Heart right ventricle (tissue), 16 donors: ENCODE measurements at regions of chr2 and their contacts with region 1.

Region 1: GRCh38 chr2:64410671-64411070 is 43.3 kb upstream of the LGALSL start:
- DNase-seq: no peak
- ATAC-seq: no peak
- H3K4me3 ChIP-seq: no peak overlapping the region
- H3K27ac ChIP-seq: no peak overlapping the region
- H3K4me1 ChIP-seq: peaks cover 0 to 11% (median 7%) of the 10 kb centered on the region in 9 donors
- H3K27me3 ChIP-seq: no peaks in the 10 kb centered on the region
- CTCF ChIP-seq: no peak

Region 2: DNA sequence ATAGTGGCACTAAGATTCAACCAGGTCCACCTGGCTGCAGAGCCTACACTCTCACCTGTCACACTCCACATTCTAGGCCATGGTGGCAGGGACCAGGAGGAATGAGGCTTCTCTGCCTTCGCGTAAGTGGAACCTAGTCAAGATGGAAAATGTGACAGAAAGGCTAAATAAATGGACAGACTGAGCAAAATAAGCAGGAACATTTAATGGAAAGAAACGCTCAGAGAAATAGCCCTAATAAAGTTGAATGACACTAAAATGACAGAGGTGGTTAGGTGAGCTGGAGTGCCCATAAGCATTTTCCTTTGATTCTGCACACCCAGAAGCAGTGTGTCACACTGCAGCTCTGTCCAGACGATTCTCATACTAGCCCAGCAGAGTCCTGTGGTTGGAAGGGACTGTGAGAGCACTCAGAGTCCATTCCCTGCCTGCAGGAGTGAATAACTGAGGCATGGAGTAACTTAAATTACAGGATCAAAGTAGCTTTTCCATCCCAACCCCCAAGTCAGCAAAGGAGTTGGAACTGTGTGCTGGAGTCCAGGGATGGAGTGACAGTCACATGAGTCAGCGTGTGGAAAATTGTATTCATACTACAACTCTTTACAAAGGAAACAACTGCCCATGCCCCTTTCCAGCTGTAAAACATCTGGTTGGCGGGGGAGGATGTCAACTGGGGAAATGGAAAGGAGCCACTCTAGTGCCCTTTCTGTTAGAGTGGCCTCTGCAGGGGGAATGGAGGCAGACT is 62.1 kb before region 1 on chr2:
- intact Hi-C with region 1: no loop called
- DNase-seq: no peak
- ATAC-seq: no peak
- H3K4me3 ChIP-seq: no peak overlapping the region
- H3K27ac ChIP-seq: no peak overlapping the region
- H3K4me1 ChIP-seq: no peaks in the 10 kb centered on the region
- H3K27me3 ChIP-seq: no peaks in the 10 kb centered on the region
- CTCF ChIP-seq: no peak

Region 3: DNA sequence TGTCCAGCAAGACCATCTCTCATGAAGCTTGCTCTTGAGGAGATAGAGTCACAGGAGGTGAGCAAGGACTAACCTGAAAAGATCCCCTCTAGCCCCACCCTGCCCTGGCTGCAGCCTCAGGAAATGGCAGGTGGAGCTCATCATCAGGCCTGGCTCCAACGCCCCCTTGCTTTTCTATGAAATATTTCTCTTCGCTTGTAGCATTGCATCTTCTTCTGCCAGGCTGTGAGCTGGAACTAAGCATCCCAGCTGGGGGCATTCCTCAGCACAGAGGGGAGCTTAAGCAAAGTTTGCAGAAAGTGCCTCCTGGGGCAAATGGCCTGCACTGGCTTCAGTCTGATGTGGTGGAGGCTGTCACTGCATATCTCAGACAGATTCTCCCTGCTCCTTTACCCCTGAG is 46.8 kb before region 1 on chr2:
- intact Hi-C with region 1: no loop called
- DNase-seq: no peak
- ATAC-seq: no peak
- H3K4me3 ChIP-seq: no peak overlapping the region
- H3K27ac ChIP-seq: no peak overlapping the region
- H3K4me1 ChIP-seq: peaks cover 0 to 16% (median 10%) of the 10 kb centered on the region in 9 donors
- H3K27me3 ChIP-seq: peaks cover 0 to 55% (median 4%) of the 10 kb centered on the region in 7 donors
- CTCF ChIP-seq: no peak

Region 4: GRCh38 chr2:64447317-64448040 is 36.8 kb after region 1 on chr2:
- intact Hi-C with region 1: loop called in 3 of 10 experiments (anchors 5 to 10 kb)
- DNase-seq: no peak
- ATAC-seq: peak in 2 of 8 donors; percentile 70 to 84
- H3K4me3 ChIP-seq: no peak overlapping the region
- H3K27ac ChIP-seq: peak overlapping the region in 4 of 10 donors; percentile 13 to 45 (median 38)
- H3K4me1 ChIP-seq: peaks cover 0 to 17% (median 12%) of the 10 kb centered on the region in 9 donors
- H3K27me3 ChIP-seq: no peaks in the 10 kb centered on the region
- CTCF ChIP-seq: no peak